IMR-90 (cell line): ENCODE measurements at regions of chr1 and their contacts with region 1.

Region 1: GRCh38 chr1:207963427-207964194 is 52.7 kb upstream of the CD34 start:
- DNase-seq: peak; percentile 75
- ATAC-seq: peak; percentile 91
- H3K4me3 ChIP-seq: peak overlapping the region; percentile 45
- H3K27ac ChIP-seq: peak overlapping the region; percentile 66
- H3K4me1 ChIP-seq: peaks cover 3% of the 10 kb centered on the region
- H3K27me3 ChIP-seq: peaks cover 3% of the 10 kb centered on the region; the same call in 1 of the 2 replicates
- CTCF ChIP-seq: peak; percentile 100
- POLR2A ChIP-seq: peak; percentile 34
- RAD21 ChIP-seq: peak; percentile 98

Region 2: DNA sequence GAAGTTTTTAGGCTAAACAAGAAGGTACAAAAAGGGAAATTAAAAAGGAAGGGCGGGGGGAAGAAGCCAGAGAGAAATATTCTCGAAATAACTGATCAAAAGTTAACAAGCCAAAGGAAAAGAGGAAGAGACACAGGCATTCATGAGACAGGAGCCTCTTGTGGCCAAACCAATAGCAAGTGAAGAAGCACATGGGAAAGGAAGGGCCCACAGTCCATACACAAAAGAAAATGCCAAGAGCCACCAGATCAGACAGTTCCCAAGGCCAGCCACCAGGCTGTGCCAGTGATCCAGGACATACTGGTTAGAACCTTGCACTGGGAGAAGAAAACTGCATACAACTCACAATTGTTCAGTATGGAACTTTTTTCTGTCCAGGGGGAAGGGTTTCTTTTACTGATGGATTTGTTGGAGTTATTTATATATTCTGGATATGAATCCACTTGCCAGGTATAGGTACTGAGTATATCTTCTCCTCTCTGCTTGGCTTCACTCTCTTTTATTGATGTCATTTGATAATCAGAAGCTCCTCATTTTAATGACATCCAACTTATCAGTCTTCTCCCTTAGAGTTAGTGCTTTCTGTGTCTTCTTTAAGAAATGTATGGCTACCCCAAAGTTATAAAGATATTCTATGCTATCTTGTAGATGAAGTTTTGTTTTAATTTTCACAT is 135.0 kb before region 1 on chr1:
- CTCF ChIA-PET with region 1: interaction called, 13 read pairs
- POLR2A ChIA-PET with region 1: no interaction called
- dilution Hi-C with region 1: no loop called
- in situ Hi-C with region 1: loop called (anchors 10 kb)
- intact Hi-C with region 1: loop called (anchors 1 kb)
- DNase-seq: peak; percentile 82
- ATAC-seq: peak; percentile 64
- H3K4me3 ChIP-seq: no peak overlapping the region
- H3K27ac ChIP-seq: no peak overlapping the region
- H3K4me1 ChIP-seq: peaks cover 26% of the 10 kb centered on the region
- H3K27me3 ChIP-seq: no peaks in the 10 kb centered on the region
- CTCF ChIP-seq: peak; percentile 85
- POLR2A ChIP-seq: 0 out of 2 replicates have a peak, but pooled peaks have one; percentile 31
- RAD21 ChIP-seq: peak; percentile 85

Region 3: GRCh38 chr1:208015255-208015654 is 51.6 kb after region 1 on chr1:
- CTCF ChIA-PET with region 1: no interaction called
- POLR2A ChIA-PET with region 1: no interaction called
- dilution Hi-C with region 1: no loop called
- in situ Hi-C with region 1: no loop called
- intact Hi-C with region 1: no loop called
- DNase-seq: no peak
- ATAC-seq: no peak
- H3K4me3 ChIP-seq: no peak overlapping the region
- H3K27ac ChIP-seq: no peak overlapping the region
- H3K4me1 ChIP-seq: no peaks in the 10 kb centered on the region
- H3K27me3 ChIP-seq: peaks cover 5% of the 10 kb centered on the region
- CTCF ChIP-seq: no peak
- POLR2A ChIP-seq: no peak
- RAD21 ChIP-seq: no peak